Naive thymus-derived CD4-positive, alpha-beta T cell (primary cell): ENCODE measurements at regions of chr3 and their contacts with region 1.

Region 1: GRCh38 chr3:138818185-138818860 is 16.4 kb downstream of the PIK3CB start:
- DNase-seq: no peak
- ATAC-seq: peak; percentile 26
- H3K4me3 ChIP-seq: no peak overlapping the region
- H3K4me3 Mint-ChIP-seq: peak overlapping the region in 4 of 10 donors; percentile 5 to 39 (median 28)
- H3K27ac ChIP-seq: no peak overlapping the region
- H3K27ac Mint-ChIP-seq: peak overlapping the region in 6 of 9 donors; percentile 35 to 84 (median 64)
- H3K4me1 ChIP-seq: peaks cover 12 to 15% of the 10 kb centered on the region in 2 donors
- H3K4me1 Mint-ChIP-seq: peaks cover 22 to 61% (median 50%) of the 10 kb centered on the region in 7 donors
- H3K27me3 ChIP-seq: no peaks in the 10 kb centered on the region
- H3K27me3 Mint-ChIP-seq: no peaks in the 10 kb centered on the region

Region 2: DNA sequence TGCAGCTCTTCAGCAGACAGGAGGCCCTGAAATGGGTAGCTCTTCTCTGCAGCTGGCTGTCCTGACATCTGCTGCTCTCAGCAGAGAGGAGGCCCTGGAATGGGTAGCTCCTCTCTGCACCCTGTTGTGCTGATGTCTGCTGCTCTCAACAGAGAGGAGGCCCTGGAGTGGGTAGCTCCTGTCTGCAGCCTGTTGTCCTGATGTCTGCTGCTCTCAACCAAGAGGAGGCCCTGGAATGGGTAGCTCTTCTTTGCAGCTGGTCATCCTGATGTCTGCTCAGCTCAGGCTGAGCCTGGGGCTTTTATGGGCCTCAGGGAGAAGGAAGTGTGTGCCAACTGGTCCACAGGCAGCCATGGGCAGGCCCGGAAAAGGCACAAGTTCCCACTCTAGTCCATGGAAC is 50.2 kb before region 1 on chr3:
- CTCF ChIA-PET with region 1: no interaction called
- POLR2A ChIA-PET with region 1: no interaction called
- intact Hi-C with region 1: no loop called
- DNase-seq: no peak
- ATAC-seq: no peak
- H3K4me3 ChIP-seq: no peak overlapping the region
- H3K4me3 Mint-ChIP-seq: no peak overlapping the region
- H3K27ac ChIP-seq: no peak overlapping the region
- H3K27ac Mint-ChIP-seq: no peak overlapping the region
- H3K4me1 ChIP-seq: peaks cover 0 to 7% of the 10 kb centered on the region in 2 donors
- H3K4me1 Mint-ChIP-seq: peaks cover 6 to 30% (median 20%) of the 10 kb centered on the region in 7 donors
- H3K27me3 ChIP-seq: no peaks in the 10 kb centered on the region
- H3K27me3 Mint-ChIP-seq: no peaks in the 10 kb centered on the region

Region 3: GRCh38 chr3:138781012-138781470 is 37.3 kb before region 1 on chr3:
- CTCF ChIA-PET with region 1: interaction called, 3 read pairs
- POLR2A ChIA-PET with region 1: no interaction called
- intact Hi-C with region 1: loop called (anchors 5 kb)
- DNase-seq: peak in 7 of 9 donors; percentile 43 to 78 (median 66)
- ATAC-seq: peak; percentile 96
- H3K4me3 ChIP-seq: peak overlapping the region; percentile 16
- H3K4me3 Mint-ChIP-seq: peak overlapping the region; percentile 3 to 84 (median 72)
- H3K27ac ChIP-seq: peak overlapping the region; percentile 57
- H3K27ac Mint-ChIP-seq: peak overlapping the region; percentile 84 to 96 (median 87)
- H3K4me1 ChIP-seq: peaks cover 10 to 15% of the 10 kb centered on the region in 2 donors
- H3K4me1 Mint-ChIP-seq: peaks cover 19 to 56% (median 48%) of the 10 kb centered on the region in 7 donors
- H3K27me3 ChIP-seq: no peaks in the 10 kb centered on the region
- H3K27me3 Mint-ChIP-seq: no peaks in the 10 kb centered on the region